Heart left ventricle (tissue), 16 donors: ENCODE measurements at regions of chr6 and their contacts with region 1.

Region 1: GRCh38 chr6:36929607-36930006 is 24.9 kb upstream of the PI16 start:
- DNase-seq: no peak
- ATAC-seq: peak in 1 of 4 donors; percentile 28
- H3K4me3 ChIP-seq: no peak overlapping the region
- H3K27ac ChIP-seq: peak overlapping the region in 4 of 12 donors; percentile 19 to 70 (median 56)
- H3K4me1 ChIP-seq: peaks cover 0 to 43% (median 16%) of the 10 kb centered on the region in 12 donors
- H3K27me3 ChIP-seq: no peaks in the 10 kb centered on the region
- CTCF ChIP-seq: no peak
- POLR2A ChIP-seq: no peak

Region 2: DNA sequence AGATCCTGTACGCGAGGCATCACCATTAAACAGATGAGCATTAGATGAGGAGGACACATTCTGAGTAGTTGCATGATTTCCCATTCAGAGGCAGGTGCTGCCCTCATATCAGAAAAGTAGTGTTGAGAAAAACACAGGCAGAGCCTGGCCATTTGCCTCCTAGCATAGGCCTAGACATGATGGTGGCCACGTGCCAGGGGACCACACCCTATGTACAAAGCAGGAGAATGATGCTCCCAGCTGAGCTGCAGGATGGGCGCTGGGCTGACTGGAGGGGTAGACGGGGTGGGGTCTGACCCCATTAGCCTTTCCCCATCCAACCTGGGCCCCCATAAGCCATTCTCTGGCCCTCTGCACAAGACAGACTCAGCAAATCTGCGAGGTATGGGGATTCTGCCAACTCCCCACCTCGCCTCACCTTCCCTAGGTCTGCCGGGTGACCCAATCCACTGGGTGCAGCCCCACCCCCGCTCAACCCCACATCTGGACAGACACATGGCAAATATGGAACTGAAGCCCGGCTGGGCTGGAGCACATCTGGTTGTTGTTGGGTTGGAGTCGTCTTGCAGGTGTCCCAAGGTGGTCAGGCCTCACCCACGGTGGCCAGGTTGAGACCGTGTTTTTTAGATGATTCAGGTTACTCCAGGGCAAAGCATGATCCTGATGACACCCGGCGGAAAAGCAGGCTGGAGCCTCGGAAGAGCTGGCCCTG is 38.8 kb after region 1 on chr6:
- intact Hi-C with region 1: loop called in 1 of 10 experiments (anchors 5 kb)
- DNase-seq: peak in 2 of 5 donors; percentile 38 to 73
- ATAC-seq: peak in 2 of 4 donors; percentile 3 to 17
- H3K4me3 ChIP-seq: no peak overlapping the region
- H3K27ac ChIP-seq: peak overlapping the region in 7 of 12 donors; percentile 10 to 68 (median 52)
- H3K4me1 ChIP-seq: peaks cover 7 to 86% (median 41%) of the 10 kb centered on the region in 12 donors
- H3K27me3 ChIP-seq: no peaks in the 10 kb centered on the region
- CTCF ChIP-seq: no peak
- POLR2A ChIP-seq: no peak

Region 3: GRCh38 chr6:37499433-37500293 is 570.1 kb after region 1 on chr6 and contains the start of gene CCDC167:
- intact Hi-C with region 1: no loop called
- DNase-seq: peak; percentile 93 to 97 (median 96)
- ATAC-seq: peak; percentile 98 to 99 (median 99)
- H3K4me3 ChIP-seq: peak within 1 kb of the TSS; percentile 32 to 77 (median 68)
- H3K27ac ChIP-seq: peak within 1 kb of the TSS in 7 of 12 donors; percentile 21 to 66 (median 53)
- H3K4me1 ChIP-seq: peaks cover 0 to 28% (median 6%) of the 10 kb centered on the region in 12 donors
- H3K27me3 ChIP-seq: no peaks in the 10 kb centered on the region
- CTCF ChIP-seq: no peak
- POLR2A ChIP-seq: peak in 1 of 2 donors; percentile 19
- total RNA-seq, gene CCDC167: 17.6 to 53.7 (median 25.2) TPM